ENCODE measurements at regions of chr6 and their contacts with region 1.

Region 1: DNA sequence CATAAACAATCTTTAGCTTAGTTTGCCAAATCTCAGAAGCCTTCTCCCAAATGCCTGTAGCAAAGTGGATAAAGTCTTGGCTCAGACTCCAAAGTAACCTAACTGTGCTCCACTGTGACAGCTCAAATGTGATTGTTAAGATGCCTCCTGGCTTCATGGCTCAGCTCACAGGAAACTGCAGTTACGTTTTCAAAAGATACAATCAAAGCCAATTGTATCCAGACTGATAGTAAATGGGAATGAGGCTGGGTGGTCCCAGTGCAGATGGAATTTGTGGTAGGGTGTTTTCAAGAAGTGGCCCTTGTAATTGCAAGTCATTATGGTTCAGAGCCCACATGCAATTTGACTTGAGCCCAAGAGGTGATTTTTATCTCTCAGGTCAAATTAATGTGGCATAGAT is 151.2 kb upstream of the TAB2 start:
- DNase-seq: no peak
- H3K4me3 Mint-ChIP-seq: no peak overlapping the region
- H3K27ac Mint-ChIP-seq: peak overlapping the region; percentile 22
- H3K4me1 Mint-ChIP-seq: peaks cover 43% of the 10 kb centered on the region
- H3K27me3 Mint-ChIP-seq: no peaks in the 10 kb centered on the region

Region 2: DNA sequence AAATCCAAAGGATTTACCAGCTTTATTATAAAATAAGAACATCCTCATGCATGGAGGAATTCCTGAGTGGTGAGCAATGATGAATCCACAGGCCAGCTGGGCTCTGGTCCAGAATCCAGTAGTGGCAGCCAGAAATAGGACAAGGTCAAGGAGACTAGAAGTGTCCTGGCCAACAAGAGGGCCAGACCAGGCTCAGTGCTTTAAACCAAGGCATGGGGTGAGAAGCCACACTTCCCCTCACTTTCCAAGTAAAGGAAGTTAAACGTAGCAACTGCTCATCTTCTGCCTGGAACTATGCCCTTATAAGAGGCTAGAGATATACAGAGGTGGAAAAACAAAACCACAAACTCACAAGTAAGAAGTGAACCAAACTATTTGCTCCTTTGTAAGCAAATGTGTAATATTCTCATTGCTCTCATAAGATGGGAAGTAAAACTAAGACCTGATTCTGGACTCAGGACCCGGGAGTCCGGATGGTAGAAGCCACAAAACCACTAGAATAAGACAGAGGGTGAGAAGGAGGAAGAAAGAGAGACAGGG is 166.3 kb before region 1 on chr6:
- CTCF ChIA-PET with region 1: no interaction called
- POLR2A ChIA-PET with region 1: no interaction called
- DNase-seq: no peak
- H3K4me3 Mint-ChIP-seq: no peak overlapping the region
- H3K27ac Mint-ChIP-seq: no peak overlapping the region
- H3K4me1 Mint-ChIP-seq: peaks cover 23% of the 10 kb centered on the region
- H3K27me3 Mint-ChIP-seq: peaks cover 5% of the 10 kb centered on the region

Region 3: GRCh38 chr6:149012040-149012545 is 154.2 kb before region 1 on chr6:
- CTCF ChIA-PET with region 1: no interaction called
- POLR2A ChIA-PET with region 1: no interaction called
- DNase-seq: no peak
- H3K4me3 Mint-ChIP-seq: no peak overlapping the region
- H3K27ac Mint-ChIP-seq: no peak overlapping the region
- H3K4me1 Mint-ChIP-seq: no peaks in the 10 kb centered on the region
- H3K27me3 Mint-ChIP-seq: peaks cover 6% of the 10 kb centered on the region

Region 4: GRCh38 chr6:149153100-149153499 is 13.2 kb before region 1 on chr6:
- CTCF ChIA-PET with region 1: interaction called, 20 read pairs
- POLR2A ChIA-PET with region 1: no interaction called
- DNase-seq: no peak
- H3K4me3 Mint-ChIP-seq: no peak overlapping the region
- H3K27ac Mint-ChIP-seq: peak overlapping the region; percentile 80
- H3K4me1 Mint-ChIP-seq: peaks cover 66% of the 10 kb centered on the region
- H3K27me3 Mint-ChIP-seq: no peaks in the 10 kb centered on the region